MCF 10A (cell line): ENCODE measurements at regions of chr7 and their contacts with region 1.

Region 1: GRCh38 chr7:77331938-77332695 is 84.0 kb downstream of the GSAP start:
- DNase-seq: peak; percentile 90
- H3K4me3 Mint-ChIP-seq: no peak overlapping the region
- H3K27ac Mint-ChIP-seq: no peak overlapping the region
- H3K4me1 Mint-ChIP-seq: peaks cover 26% of the 10 kb centered on the region
- H3K27me3 Mint-ChIP-seq: no peaks in the 10 kb centered on the region
- CTCF ChIP-seq: peak; percentile 75

Region 2: DNA sequence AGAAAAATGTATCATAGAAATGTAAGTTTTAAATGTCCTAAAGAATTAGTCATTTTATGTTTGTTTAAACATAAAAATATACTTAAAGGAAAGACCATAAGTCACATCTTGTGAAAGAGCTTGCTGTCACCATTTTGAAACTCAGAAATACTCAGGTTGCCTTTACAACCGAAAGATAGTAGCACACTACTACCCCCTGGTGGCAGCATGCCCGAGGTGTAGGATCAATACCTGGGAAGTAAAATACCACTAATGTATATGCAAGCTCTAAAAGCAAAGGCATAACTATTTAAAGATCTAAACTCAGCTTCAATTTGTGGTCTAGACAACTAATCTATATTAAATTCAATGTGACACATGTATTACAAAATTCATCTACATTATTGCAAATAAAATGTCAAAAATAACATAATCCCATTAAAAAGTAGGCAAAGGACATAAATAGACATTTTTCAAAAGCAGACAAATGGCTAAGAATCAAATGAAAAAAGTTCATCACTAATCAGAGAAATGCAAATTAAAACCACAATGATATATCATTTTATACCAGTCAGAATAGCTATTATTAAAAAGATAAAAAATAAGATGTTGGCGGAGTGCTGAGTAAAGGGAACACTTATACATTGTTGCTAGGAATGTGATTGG is 84.8 kb before region 1 on chr7:
- CTCF ChIA-PET with region 1: interaction called, 33 read pairs
- POLR2A ChIA-PET with region 1: interaction called, 6 read pairs
- intact Hi-C with region 1: loop called (anchors 1 kb)
- DNase-seq: peak; percentile 74
- H3K4me3 Mint-ChIP-seq: no peak overlapping the region
- H3K27ac Mint-ChIP-seq: no peak overlapping the region
- H3K4me1 Mint-ChIP-seq: no peaks in the 10 kb centered on the region
- H3K27me3 Mint-ChIP-seq: no peaks in the 10 kb centered on the region
- CTCF ChIP-seq: peak; percentile 79

Region 3: GRCh38 chr7:77321300-77321699 is 10.8 kb before region 1 on chr7:
- CTCF ChIA-PET with region 1: interaction called, 21 read pairs
- POLR2A ChIA-PET with region 1: no interaction called
- intact Hi-C with region 1: no loop called
- DNase-seq: no peak
- H3K4me3 Mint-ChIP-seq: no peak overlapping the region
- H3K27ac Mint-ChIP-seq: no peak overlapping the region
- H3K4me1 Mint-ChIP-seq: peaks cover 10% of the 10 kb centered on the region
- H3K27me3 Mint-ChIP-seq: no peaks in the 10 kb centered on the region
- CTCF ChIP-seq: no peak

Region 4: GRCh38 chr7:77348371-77348813 is 16.3 kb after region 1 on chr7:
- CTCF ChIA-PET with region 1: interaction called, 13 read pairs
- POLR2A ChIA-PET with region 1: interaction called, 5 read pairs
- intact Hi-C with region 1: no loop called
- DNase-seq: peak; percentile 88
- H3K4me3 Mint-ChIP-seq: no peak overlapping the region
- H3K27ac Mint-ChIP-seq: peak overlapping the region; percentile 69
- H3K4me1 Mint-ChIP-seq: peaks cover 9% of the 10 kb centered on the region
- H3K27me3 Mint-ChIP-seq: no peaks in the 10 kb centered on the region
- CTCF ChIP-seq: no peak

Region 5: GRCh38 chr7:77481615-77482402 is 149.7 kb after region 1 on chr7:
- CTCF ChIA-PET with region 1: no interaction called
- POLR2A ChIA-PET with region 1: no interaction called
- intact Hi-C with region 1: no loop called
- DNase-seq: peak; percentile 90
- H3K4me3 Mint-ChIP-seq: no peak overlapping the region
- H3K27ac Mint-ChIP-seq: peak overlapping the region; percentile 80
- H3K4me1 Mint-ChIP-seq: peaks cover 5% of the 10 kb centered on the region
- H3K27me3 Mint-ChIP-seq: no peaks in the 10 kb centered on the region
- CTCF ChIP-seq: no peak